ENCODE measurements at regions of chr12 and their contacts with region 1.

Region 1: GRCh38 chr12:62581288-62582064 is 114.8 kb downstream of the MON2 start:
- DNase-seq: peak in 6 of 9 donors; percentile 18 to 53 (median 34)
- ATAC-seq: peak; percentile 81
- H3K4me3 ChIP-seq: no peak overlapping the region
- H3K4me3 Mint-ChIP-seq: no peak overlapping the region
- H3K27ac ChIP-seq: no peak overlapping the region
- H3K27ac Mint-ChIP-seq: peak overlapping the region in 1 of 9 donors; percentile 21
- H3K4me1 ChIP-seq: no peaks in the 10 kb centered on the region
- H3K4me1 Mint-ChIP-seq: peaks cover 0 to 2% (median 0%) of the 10 kb centered on the region in 7 donors
- H3K27me3 ChIP-seq: no peaks in the 10 kb centered on the region
- H3K27me3 Mint-ChIP-seq: no peaks in the 10 kb centered on the region

Region 2: DNA sequence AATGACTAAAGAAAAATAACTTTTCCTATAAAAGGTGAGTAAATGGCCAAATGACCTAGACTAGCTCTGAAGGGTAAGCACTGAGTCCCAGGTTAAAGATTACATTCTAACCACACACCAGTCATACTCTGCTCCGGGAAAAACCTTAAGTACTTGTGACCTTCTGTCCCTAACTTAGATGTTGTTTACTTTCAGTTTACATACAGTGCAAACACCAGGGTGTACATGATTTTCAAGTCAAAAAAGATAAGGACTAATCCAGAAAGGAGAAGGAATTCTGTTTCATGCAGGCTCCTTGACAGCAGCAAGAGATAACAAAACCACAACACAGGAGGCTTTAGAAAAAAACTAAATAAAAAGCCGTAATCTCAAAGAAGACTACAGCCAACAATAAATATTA is 179.3 kb after region 1 on chr12:
- CTCF ChIA-PET with region 1: no interaction called
- POLR2A ChIA-PET with region 1: no interaction called
- intact Hi-C with region 1: no loop called
- DNase-seq: no peak
- ATAC-seq: no peak
- H3K4me3 ChIP-seq: no peak overlapping the region
- H3K4me3 Mint-ChIP-seq: no peak overlapping the region
- H3K27ac ChIP-seq: no peak overlapping the region
- H3K27ac Mint-ChIP-seq: no peak overlapping the region
- H3K4me1 ChIP-seq: no peaks in the 10 kb centered on the region
- H3K4me1 Mint-ChIP-seq: peaks cover 0 to 7% (median 0%) of the 10 kb centered on the region in 7 donors
- H3K27me3 ChIP-seq: no peaks in the 10 kb centered on the region
- H3K27me3 Mint-ChIP-seq: peaks cover 2 to 12% (median 6%) of the 10 kb centered on the region in 5 donors

Region 3: GRCh38 chr12:62793256-62794217 is 212.1 kb after region 1 on chr12:
- CTCF ChIA-PET with region 1: interaction called, 86 read pairs
- POLR2A ChIA-PET with region 1: no interaction called
- intact Hi-C with region 1: loop called (anchors 1 kb)
- DNase-seq: peak; percentile 32 to 77 (median 62)
- ATAC-seq: peak; percentile 86
- H3K4me3 ChIP-seq: no peak overlapping the region
- H3K4me3 Mint-ChIP-seq: no peak overlapping the region
- H3K27ac ChIP-seq: no peak overlapping the region
- H3K27ac Mint-ChIP-seq: no peak overlapping the region
- H3K4me1 ChIP-seq: no peaks in the 10 kb centered on the region
- H3K4me1 Mint-ChIP-seq: peaks cover 0 to 4% (median 0%) of the 10 kb centered on the region in 7 donors
- H3K27me3 ChIP-seq: no peaks in the 10 kb centered on the region
- H3K27me3 Mint-ChIP-seq: peaks cover 0 to 21% (median 0%) of the 10 kb centered on the region in 5 donors

Region 4: DNA sequence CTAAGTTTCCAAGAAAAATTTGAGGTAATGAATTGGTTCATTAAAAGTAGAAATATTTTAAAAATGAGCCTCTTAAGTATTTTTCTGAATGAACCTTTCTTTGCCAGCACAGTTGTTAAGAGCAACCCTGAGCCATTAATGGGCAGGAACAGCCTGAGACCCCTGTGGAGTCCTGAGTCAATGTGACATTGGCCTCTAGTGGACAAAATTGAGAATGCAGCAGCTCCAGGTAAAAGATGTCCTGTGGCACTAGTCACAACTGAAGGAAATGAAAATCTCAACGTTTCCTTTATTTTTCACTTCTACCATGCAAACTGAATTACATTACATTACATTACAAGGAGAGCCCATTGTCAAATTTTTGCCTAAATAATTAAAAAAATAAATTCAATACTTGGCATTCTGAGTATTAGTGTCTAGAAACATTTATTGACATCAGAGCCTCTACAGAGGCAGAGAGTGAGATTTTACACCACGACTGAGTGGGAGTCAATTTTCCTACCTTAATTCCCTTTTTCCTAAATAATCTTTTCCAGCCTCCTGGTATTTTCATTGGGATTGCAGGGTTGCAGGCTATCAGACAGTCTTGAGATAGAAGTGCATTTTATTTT is 217.8 kb after region 1 on chr12:
- CTCF ChIA-PET with region 1: interaction called, 86 read pairs
- POLR2A ChIA-PET with region 1: no interaction called
- intact Hi-C with region 1: loop called (anchors 1 kb)
- DNase-seq: peak in 8 of 9 donors; percentile 5 to 53 (median 40)
- ATAC-seq: peak; percentile 81
- H3K4me3 ChIP-seq: no peak overlapping the region
- H3K4me3 Mint-ChIP-seq: no peak overlapping the region
- H3K27ac ChIP-seq: no peak overlapping the region
- H3K27ac Mint-ChIP-seq: no peak overlapping the region
- H3K4me1 ChIP-seq: no peaks in the 10 kb centered on the region
- H3K4me1 Mint-ChIP-seq: no peaks in the 10 kb centered on the region
- H3K27me3 ChIP-seq: no peaks in the 10 kb centered on the region
- H3K27me3 Mint-ChIP-seq: peaks cover 0 to 14% (median 0%) of the 10 kb centered on the region in 5 donors